Naive thymus-derived CD8-positive, alpha-beta T cell (primary cell): ENCODE measurements at regions of chr2 and their contacts with region 1.

Region 1: DNA sequence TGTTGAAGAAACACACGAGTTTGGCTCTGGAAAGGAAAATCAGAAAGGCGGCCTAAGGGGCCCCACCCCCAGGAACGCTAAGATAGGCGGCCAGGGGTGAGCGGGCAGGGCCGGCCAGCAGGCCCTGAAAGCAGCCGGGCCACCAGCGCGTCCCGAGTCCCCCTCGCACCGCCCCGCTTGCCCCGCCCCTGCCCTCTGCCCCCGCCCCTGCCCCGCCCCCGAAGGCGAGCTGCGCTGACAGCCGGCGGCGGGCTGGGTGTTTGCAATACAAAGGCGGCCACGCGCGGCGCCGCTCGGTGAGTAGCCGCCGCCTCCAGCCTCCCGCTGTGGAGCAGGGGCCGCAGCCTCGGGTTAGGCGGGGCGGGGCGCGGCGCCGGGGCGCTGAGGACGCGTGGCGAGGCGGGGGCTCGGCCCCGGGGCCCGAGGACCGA is at the start of gene LPIN1:
- DNase-seq: peak; percentile 75 to 90 (median 86)
- ATAC-seq: peak; percentile 74 to 83
- H3K4me3 Mint-ChIP-seq: peak within 1 kb of the TSS; percentile 85 to 96 (median 93)
- H3K27ac Mint-ChIP-seq: peak within 1 kb of the TSS; percentile 86 to 96 (median 93)
- H3K4me1 Mint-ChIP-seq: peaks cover 46 to 69% (median 67%) of the 10 kb centered on the region in 4 donors
- H3K27me3 Mint-ChIP-seq: no peaks in the 10 kb centered on the region
- polyA plus RNA-seq, gene LPIN1: 15.7 to 27.5 (median 19.9) TPM

Region 2: DNA sequence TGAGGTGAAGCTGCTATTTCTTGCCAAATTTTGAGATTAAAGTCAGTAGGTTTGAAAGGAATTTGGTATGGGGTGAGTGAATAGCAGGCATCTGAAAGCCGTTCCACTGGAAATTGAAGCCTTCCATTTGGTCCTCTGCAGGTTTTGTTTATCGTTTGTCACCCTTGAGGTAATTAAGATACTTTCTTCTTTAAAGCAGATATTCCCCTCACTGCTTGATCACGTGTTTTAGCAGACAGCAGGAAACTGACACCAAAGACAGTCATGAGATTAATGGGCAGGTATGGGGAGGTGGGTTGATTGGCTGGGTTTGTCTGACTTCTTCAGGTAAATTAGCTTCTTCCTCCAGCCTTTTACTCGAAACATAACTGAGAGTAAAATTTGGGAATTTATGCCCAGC is 10.7 kb after region 1 on chr2:
- POLR2A ChIA-PET with region 1: interaction called, 16 read pairs
- DNase-seq: peak in 3 of 10 donors; percentile 20 to 34 (median 32)
- ATAC-seq: peak; percentile 19 to 51
- H3K4me3 Mint-ChIP-seq: peak overlapping the region in 7 of 10 donors; percentile 22 to 65 (median 48)
- H3K27ac Mint-ChIP-seq: peak overlapping the region; percentile 6 to 96 (median 73)
- H3K4me1 Mint-ChIP-seq: peaks cover 48 to 85% (median 81%) of the 10 kb centered on the region in 4 donors
- H3K27me3 Mint-ChIP-seq: no peaks in the 10 kb centered on the region